ENCODE measurements at regions of chr22 and their contacts with region 1.

Region 1: DNA sequence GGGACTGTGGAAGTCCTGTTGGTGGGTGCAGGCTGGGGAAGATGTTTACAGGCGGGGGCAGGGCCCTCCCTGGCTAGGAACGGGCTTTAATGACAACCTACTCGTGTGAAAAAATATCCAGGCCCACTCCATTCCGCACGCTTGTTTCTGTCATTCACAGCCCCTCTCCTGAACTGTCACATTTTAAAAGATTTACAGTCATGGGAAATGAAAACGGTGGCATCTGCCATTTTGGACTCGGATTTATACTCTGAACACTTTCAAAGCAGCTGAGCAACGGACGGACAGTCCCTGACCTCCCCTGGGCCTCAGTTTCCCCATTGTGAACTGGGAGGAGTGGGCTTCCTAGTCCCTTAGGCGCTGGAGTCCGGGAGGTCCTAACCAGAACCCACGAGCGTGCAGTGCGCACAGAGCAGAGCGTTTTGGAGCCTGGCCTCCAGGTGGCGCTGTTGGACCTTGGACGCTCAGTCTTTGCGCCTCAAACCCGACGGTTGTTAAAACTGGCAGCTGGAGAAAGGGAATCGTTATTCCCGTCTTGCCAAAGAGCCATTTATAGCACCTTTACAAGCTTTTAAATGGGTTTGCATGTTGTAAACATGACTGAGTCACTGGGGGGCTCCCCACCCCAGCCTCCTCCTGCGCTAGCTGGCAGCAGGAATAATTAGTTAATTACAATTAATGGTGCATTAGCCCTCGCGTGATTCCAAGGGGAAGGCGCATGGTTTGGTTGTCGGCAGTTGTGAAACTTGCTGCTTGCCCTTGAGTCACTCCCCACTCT is 75.3 kb downstream of the FBLN1 start:
- DNase-seq: peak; percentile 85
- H3K4me3 ChIP-seq: peak overlapping the region in 1 of 2 experiments; percentile 38; a peak in 1 of 4 replicates
- H3K27ac ChIP-seq: no peak overlapping the region
- H3K4me1 ChIP-seq: no peaks in the 10 kb centered on the region; a peak in 1 of 4 replicates
- H3K27me3 ChIP-seq: no peaks in the 10 kb centered on the region
- CTCF ChIP-seq: peak; percentile 94
- EP300 ChIP-seq: no peak
- RAD21 ChIP-seq: peak; percentile 97

Region 2: GRCh38 chr22:45413368-45414211 is 164.3 kb before region 1 on chr22 and contains the starts of genes RIBC2 and SMC1B:
- CTCF ChIA-PET with region 1: no interaction called
- POLR2A ChIA-PET with region 1: no interaction called
- DNase-seq: no peak
- H3K4me3 ChIP-seq: no peak within 1 kb of the TSS
- H3K27ac ChIP-seq: no peak within 1 kb of the TSS
- H3K4me1 ChIP-seq: no peaks in the 10 kb centered on the region
- H3K27me3 ChIP-seq: no peaks in the 10 kb centered on the region; the same call in 1 of the 2 replicates
- CTCF ChIP-seq: no peak
- EP300 ChIP-seq: no peak
- RAD21 ChIP-seq: no peak
- polyA plus RNA-seq, gene RIBC2: not detected in 2 replicates
- polyA plus RNA-seq, gene SMC1B: not detected in 2 replicates

Region 3: GRCh38 chr22:45597460-45598192 is 19.7 kb after region 1 on chr22:
- CTCF ChIA-PET with region 1: interaction called, 33 read pairs
- POLR2A ChIA-PET with region 1: no interaction called
- DNase-seq: peak; percentile 60
- H3K4me3 ChIP-seq: no peak overlapping the region
- H3K27ac ChIP-seq: no peak overlapping the region
- H3K4me1 ChIP-seq: peaks cover 6 to 30% of the 10 kb centered on the region in 2 experiments; a peak in 2 of 4 replicates
- H3K27me3 ChIP-seq: no peaks in the 10 kb centered on the region
- CTCF ChIP-seq: no peak
- EP300 ChIP-seq: no peak
- RAD21 ChIP-seq: no peak

Region 4: DNA sequence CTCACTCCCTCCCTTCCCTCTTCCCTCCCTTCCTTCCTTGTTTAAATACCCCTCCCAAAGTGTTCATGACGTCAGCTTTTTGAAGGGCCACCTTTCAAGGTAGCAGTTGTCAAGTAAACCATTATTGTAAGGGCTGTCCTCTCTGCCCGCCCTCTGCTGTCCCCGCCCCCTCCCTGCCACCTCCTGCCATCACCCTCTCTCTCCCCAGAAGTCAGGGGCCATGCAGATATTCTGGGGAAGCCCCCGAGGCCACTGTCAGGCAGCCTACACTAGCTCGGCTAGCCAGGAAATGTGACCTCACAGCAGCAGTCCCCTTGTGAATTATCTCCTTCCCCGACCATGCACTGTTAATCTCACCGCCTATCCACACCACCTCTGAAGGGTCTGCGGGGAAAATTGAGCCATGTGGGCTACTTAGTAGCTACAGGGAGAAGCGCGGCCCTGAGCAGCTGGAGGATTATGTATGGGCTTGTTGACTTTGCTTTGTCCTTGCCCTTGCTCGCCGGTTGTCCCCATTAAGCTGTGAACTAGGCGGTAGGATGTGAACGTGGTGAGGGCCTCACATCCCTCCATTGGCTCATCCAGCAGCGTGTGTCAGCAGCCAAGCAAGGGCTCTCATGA is 51.6 kb after region 1 on chr22:
- CTCF ChIA-PET with region 1: interaction called, 13 read pairs
- POLR2A ChIA-PET with region 1: no interaction called
- DNase-seq: peak; percentile 64
- H3K4me3 ChIP-seq: no peak overlapping the region
- H3K27ac ChIP-seq: no peak overlapping the region
- H3K4me1 ChIP-seq: no peaks in the 10 kb centered on the region
- H3K27me3 ChIP-seq: no peaks in the 10 kb centered on the region; the same call in 1 of the 2 replicates
- CTCF ChIP-seq: no peak
- EP300 ChIP-seq: no peak
- RAD21 ChIP-seq: no peak

Region 5: DNA sequence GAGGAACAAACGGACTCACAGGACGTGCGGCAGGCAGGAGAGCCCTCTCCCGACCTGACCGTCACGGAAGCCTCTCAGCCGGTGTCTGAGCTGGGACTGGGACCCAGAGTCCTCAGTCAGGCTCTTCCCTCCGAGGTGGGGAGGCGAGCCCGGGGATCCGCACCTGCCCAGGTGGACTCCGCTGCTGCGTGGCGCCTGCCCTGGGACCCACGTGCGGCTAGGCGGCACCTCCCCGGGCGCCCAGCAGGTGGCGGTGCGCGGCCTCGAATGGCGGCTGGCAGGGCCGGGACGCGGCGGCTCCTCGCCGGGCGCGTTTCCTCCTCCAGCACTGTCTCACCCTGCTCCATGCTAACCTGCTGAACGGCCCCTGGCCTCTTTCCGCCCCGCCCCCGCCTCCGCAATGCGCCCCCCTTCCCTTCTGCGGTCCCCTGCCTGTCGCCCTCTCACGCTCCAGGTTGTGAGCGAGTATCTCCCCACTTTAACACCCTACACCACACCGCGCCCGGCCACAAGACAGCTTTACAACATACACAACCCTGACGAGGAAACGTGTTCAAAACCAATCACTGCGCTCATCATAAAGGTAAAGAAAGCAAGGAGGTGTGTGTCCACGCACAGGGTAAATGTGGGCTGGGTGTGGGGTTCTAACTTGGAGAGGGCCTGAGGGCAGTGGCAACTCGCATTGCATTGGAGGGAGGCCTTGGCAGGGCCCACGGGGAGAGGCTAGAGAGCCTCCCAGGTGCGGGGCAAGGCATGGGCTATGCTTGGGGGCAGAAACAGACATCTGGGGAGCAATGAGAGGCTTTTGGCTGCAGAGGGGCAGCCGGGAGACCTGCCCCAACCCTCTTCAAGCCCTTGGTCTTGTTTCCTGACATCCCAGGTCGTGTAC is 67.8 kb after region 1 on chr22:
- CTCF ChIA-PET with region 1: interaction called, 51 read pairs
- POLR2A ChIA-PET with region 1: interaction called, 5 read pairs
- DNase-seq: peak; percentile 94
- H3K4me3 ChIP-seq: peak overlapping the region in 1 of 2 experiments; percentile 35; a peak in 2 of 4 replicates
- H3K27ac ChIP-seq: no peak overlapping the region
- H3K4me1 ChIP-seq: no peaks in the 10 kb centered on the region; a peak in 1 of 4 replicates
- H3K27me3 ChIP-seq: no peaks in the 10 kb centered on the region
- CTCF ChIP-seq: peak; percentile 81
- EP300 ChIP-seq: no peak
- RAD21 ChIP-seq: peak; percentile 91

Region 6: DNA sequence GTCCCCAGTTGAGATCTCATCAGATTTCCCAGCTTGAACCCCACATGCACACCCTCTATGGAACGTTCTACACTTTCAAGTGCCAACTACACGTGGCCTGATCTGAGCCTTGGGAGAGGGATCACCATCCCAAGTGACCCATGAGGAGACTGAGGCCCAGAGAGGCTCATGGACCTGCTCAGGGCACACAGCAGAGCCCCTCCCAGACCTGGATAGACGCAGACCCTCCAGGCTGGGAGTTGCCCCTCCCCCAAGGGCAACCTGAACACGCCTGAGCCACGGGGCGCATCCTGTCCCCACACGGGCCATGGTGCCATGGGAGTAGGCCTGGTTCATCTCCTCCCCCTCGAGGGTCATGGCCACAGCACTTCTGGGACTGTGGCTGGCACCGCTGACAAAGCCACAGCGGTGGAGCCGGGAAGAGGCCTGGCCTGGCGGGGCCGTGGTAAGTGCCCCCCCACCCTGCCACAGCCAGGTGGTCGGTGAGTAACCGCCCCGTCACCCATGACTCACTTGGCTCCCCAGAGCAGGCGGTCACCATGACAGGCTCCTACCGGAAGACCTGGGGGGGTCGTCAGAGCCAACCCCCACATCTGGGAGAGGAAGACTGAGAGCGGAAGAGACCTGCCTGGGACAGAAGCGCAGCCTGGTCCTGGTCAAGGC is 390.9 kb after region 1 on chr22:
- CTCF ChIA-PET with region 1: interaction called, 36 read pairs
- POLR2A ChIA-PET with region 1: no interaction called
- DNase-seq: peak; percentile 24
- H3K4me3 ChIP-seq: no peak overlapping the region
- H3K27ac ChIP-seq: no peak overlapping the region
- H3K4me1 ChIP-seq: peaks cover 4 to 5% of the 10 kb centered on the region in 2 experiments; a peak in 2 of 4 replicates
- H3K27me3 ChIP-seq: peaks cover 29% of the 10 kb centered on the region
- CTCF ChIP-seq: no peak
- EP300 ChIP-seq: peak in 1 of 2 experiments; percentile 87; a peak in 2 of 4 replicates
- RAD21 ChIP-seq: no peak

Region 7: GRCh38 chr22:45984316-45984916 is 406.5 kb after region 1 on chr22:
- CTCF ChIA-PET with region 1: interaction called, 10 read pairs
- POLR2A ChIA-PET with region 1: no interaction called
- DNase-seq: no peak
- H3K4me3 ChIP-seq: no peak overlapping the region
- H3K27ac ChIP-seq: no peak overlapping the region
- H3K4me1 ChIP-seq: no peaks in the 10 kb centered on the region
- H3K27me3 ChIP-seq: no peaks in the 10 kb centered on the region
- CTCF ChIP-seq: no peak
- EP300 ChIP-seq: no peak
- RAD21 ChIP-seq: no peak

Measured in SK-N-SH (cell line).